ENCODE measurements at regions of chr7 and their contacts with region 1.

Region 1: GRCh38 chr7:47088329-47089067 is 493.4 kb downstream of the TNS3 start:
- DNase-seq: no peak
- ATAC-seq: peak; percentile 89
- H3K4me3 ChIP-seq: no peak overlapping the region
- H3K27ac ChIP-seq: no peak overlapping the region
- H3K4me1 ChIP-seq: no peaks in the 10 kb centered on the region
- H3K27me3 ChIP-seq: no peaks in the 10 kb centered on the region
- CTCF ChIP-seq: peak; percentile 74 to 86 (median 76)
- EP300 ChIP-seq: no peak
- POLR2A ChIP-seq: no peak
- RAD21 ChIP-seq: peak; percentile 90

Region 2: GRCh38 chr7:45890902-45891461 is 1197.5 kb before region 1 on chr7:
- CTCF ChIA-PET with region 1: interaction called, 3 read pairs
- POLR2A ChIA-PET with region 1: no interaction called
- RAD21 ChIA-PET with region 1: no interaction called
- SMC1A ChIA-PET with region 1: interaction called, 3 read pairs
- in situ Hi-C with region 1: no loop called
- intact Hi-C with region 1: loop called (anchors 1 kb)
- DNase-seq: no peak
- ATAC-seq: peak; percentile 31; the same call in 1 of the 3 replicates
- H3K4me3 ChIP-seq: no peak overlapping the region
- H3K27ac ChIP-seq: no peak overlapping the region
- H3K4me1 ChIP-seq: no peaks in the 10 kb centered on the region
- H3K27me3 ChIP-seq: peaks cover 0 to 14% of the 10 kb centered on the region in 2 experiments
- CTCF ChIP-seq: peak; percentile 23 to 62 (median 51); a peak in 5 of 6 replicates
- EP300 ChIP-seq: no peak
- POLR2A ChIP-seq: no peak
- RAD21 ChIP-seq: peak; percentile 65

Region 3: DNA sequence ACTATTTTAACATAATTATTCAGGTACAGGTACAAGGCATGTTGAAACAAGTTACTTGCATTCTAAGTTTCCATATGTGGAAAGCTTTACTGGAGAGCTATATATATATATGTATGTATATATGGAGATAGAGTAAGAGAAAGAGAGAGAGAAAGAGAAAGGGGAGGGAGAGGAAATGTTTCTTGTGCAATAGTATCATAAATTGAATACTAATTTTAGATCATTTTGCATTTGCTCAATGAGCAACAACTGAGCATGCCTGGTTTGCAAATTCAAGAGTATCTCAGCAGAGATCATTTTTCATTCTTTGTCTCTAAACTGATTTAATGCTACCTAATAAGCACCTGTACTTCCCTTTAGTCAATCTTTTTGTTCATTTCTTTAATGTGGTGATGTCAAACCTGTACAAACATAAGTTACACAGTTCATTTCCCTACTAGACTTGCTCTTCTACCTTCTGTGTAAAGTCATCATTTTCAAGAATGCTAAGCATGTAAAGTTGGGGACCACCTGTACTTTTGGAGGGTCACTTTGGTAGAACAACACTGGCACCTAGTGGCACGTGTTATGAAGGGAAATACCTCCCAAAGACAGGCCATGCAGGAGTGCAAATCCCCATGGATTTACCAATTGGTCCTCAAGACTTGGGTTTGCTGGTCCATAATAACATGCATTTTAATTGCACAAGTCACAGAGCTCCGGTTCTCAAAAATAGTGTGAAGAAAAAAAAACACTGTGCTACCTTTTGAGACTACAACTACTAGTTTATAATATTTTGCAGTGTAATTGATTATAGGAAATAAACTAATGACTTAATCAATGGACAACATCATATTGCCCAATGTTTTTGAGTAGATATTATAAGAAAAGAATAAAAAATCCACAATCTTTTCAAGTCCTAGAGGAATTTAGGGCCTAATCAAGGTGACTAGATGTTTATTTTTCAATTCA is 736.2 kb before region 1 on chr7:
- CTCF ChIA-PET with region 1: interaction called, 11 read pairs
- POLR2A ChIA-PET with region 1: no interaction called
- RAD21 ChIA-PET with region 1: interaction called, 16 read pairs
- SMC1A ChIA-PET with region 1: interaction called, 3 read pairs
- in situ Hi-C with region 1: loop called (anchors 25 kb)
- intact Hi-C with region 1: no loop called
- DNase-seq: peak; percentile 35
- ATAC-seq: peak; percentile 82
- H3K4me3 ChIP-seq: no peak overlapping the region
- H3K27ac ChIP-seq: no peak overlapping the region
- H3K4me1 ChIP-seq: no peaks in the 10 kb centered on the region
- H3K27me3 ChIP-seq: no peaks in the 10 kb centered on the region
- CTCF ChIP-seq: peak; percentile 51 to 88 (median 62)
- EP300 ChIP-seq: no peak
- POLR2A ChIP-seq: no peak
- RAD21 ChIP-seq: peak; percentile 93

Region 4: GRCh38 chr7:46682836-46683624 is 405.5 kb before region 1 on chr7:
- CTCF ChIA-PET with region 1: interaction called, 20 read pairs
- POLR2A ChIA-PET with region 1: no interaction called
- RAD21 ChIA-PET with region 1: interaction called, 4 read pairs
- SMC1A ChIA-PET with region 1: interaction called, 3 read pairs
- in situ Hi-C with region 1: no loop called
- intact Hi-C with region 1: no loop called
- DNase-seq: no peak
- ATAC-seq: peak; percentile 76
- H3K4me3 ChIP-seq: no peak overlapping the region
- H3K27ac ChIP-seq: no peak overlapping the region
- H3K4me1 ChIP-seq: no peaks in the 10 kb centered on the region
- H3K27me3 ChIP-seq: no peaks in the 10 kb centered on the region
- CTCF ChIP-seq: no peak
- EP300 ChIP-seq: no peak
- POLR2A ChIP-seq: no peak
- RAD21 ChIP-seq: no peak

Region 5: DNA sequence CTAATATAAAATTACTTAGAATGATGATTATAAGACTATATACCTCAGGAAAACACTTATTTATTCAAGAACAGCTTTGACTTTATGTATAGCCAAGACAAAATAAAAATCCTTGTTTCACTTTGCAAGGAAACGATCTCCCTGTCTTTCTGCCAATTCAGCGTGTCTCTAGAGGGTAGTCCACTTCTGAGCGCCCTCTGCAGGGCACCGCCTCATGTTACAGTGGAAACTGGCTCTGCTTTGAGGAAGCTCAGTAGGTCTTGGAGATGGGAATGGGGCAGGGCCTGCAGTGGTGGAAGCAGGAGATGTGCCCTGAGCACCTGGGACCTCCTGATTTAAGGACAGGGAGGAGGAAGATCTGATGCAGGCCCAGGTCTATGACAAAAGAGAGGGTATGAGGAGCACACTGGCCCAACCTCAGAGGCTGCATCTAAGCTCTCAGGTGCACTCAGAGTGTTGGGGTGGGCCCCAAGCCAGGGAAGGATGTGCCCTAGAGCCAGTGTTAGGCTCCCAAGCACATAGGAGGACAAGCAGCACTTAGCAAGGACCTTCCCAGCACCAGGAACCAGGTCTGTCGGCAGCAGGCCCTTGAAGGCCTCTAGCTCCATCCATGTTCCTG is 12.4 kb after region 1 on chr7:
- CTCF ChIA-PET with region 1: interaction called, 13 read pairs
- POLR2A ChIA-PET with region 1: no interaction called
- RAD21 ChIA-PET with region 1: interaction called, 3 read pairs
- SMC1A ChIA-PET with region 1: interaction called, 5 read pairs
- in situ Hi-C with region 1: no loop called
- intact Hi-C with region 1: no loop called
- DNase-seq: no peak
- ATAC-seq: no peak
- H3K4me3 ChIP-seq: no peak overlapping the region
- H3K27ac ChIP-seq: no peak overlapping the region
- H3K4me1 ChIP-seq: no peaks in the 10 kb centered on the region
- H3K27me3 ChIP-seq: no peaks in the 10 kb centered on the region
- CTCF ChIP-seq: peak; percentile 16 to 39 (median 28); a peak in 3 of 6 replicates
- EP300 ChIP-seq: no peak
- POLR2A ChIP-seq: no peak
- RAD21 ChIP-seq: no peak

Region 6: GRCh38 chr7:47254081-47255006 is 165.8 kb after region 1 on chr7:
- CTCF ChIA-PET with region 1: interaction called, 4 read pairs
- POLR2A ChIA-PET with region 1: no interaction called
- RAD21 ChIA-PET with region 1: no interaction called
- SMC1A ChIA-PET with region 1: interaction called, 4 read pairs
- in situ Hi-C with region 1: no loop called
- intact Hi-C with region 1: loop called (anchors 10 kb)
- DNase-seq: no peak
- ATAC-seq: peak; percentile 97
- H3K4me3 ChIP-seq: peak overlapping the region; percentile 27; the same call in 1 of the 2 replicates
- H3K27ac ChIP-seq: no peak overlapping the region
- H3K4me1 ChIP-seq: no peaks in the 10 kb centered on the region
- H3K27me3 ChIP-seq: peaks cover 0 to 4% of the 10 kb centered on the region in 2 experiments; a peak in 2 of 4 replicates
- CTCF ChIP-seq: peak; percentile 63 to 78 (median 65); a peak in 5 of 6 replicates
- EP300 ChIP-seq: no peak
- POLR2A ChIP-seq: no peak
- RAD21 ChIP-seq: peak; percentile 38

Region 7: GRCh38 chr7:47392231-47392759 is 303.8 kb after region 1 on chr7:
- CTCF ChIA-PET with region 1: no interaction called
- POLR2A ChIA-PET with region 1: no interaction called
- RAD21 ChIA-PET with region 1: no interaction called
- SMC1A ChIA-PET with region 1: no interaction called
- in situ Hi-C with region 1: no loop called
- intact Hi-C with region 1: no loop called
- DNase-seq: no peak
- ATAC-seq: no peak
- H3K4me3 ChIP-seq: no peak overlapping the region
- H3K27ac ChIP-seq: no peak overlapping the region
- H3K4me1 ChIP-seq: no peaks in the 10 kb centered on the region
- H3K27me3 ChIP-seq: no peaks in the 10 kb centered on the region; a peak in 1 of 4 replicates
- CTCF ChIP-seq: no peak
- EP300 ChIP-seq: no peak
- POLR2A ChIP-seq: no peak
- RAD21 ChIP-seq: no peak

Measured in GM12878 (cell line).